A673 (cell line): ENCODE measurements at regions of chr3 and their contacts with region 1.

Region 1: GRCh38 chr3:183033746-183034145 is 53.4 kb upstream of the DCUN1D1 start:
- DNase-seq: no peak
- H3K4me3 ChIP-seq: no peak overlapping the region
- H3K27ac ChIP-seq: no peak overlapping the region
- H3K4me1 ChIP-seq: no peaks in the 10 kb centered on the region
- H3K27me3 ChIP-seq: no peaks in the 10 kb centered on the region
- CTCF ChIP-seq: no peak

Region 2: GRCh38 chr3:182980204-182981037 is 53.3 kb before region 1 on chr3 and contains the start of gene DCUN1D1:
- CTCF ChIA-PET with region 1: no interaction called
- POLR2A ChIA-PET with region 1: interaction called, 10 read pairs
- intact Hi-C with region 1: no loop called
- DNase-seq: peak; percentile 89
- H3K4me3 ChIP-seq: peak within 1 kb of the TSS; percentile 82
- H3K27ac ChIP-seq: peak within 1 kb of the TSS; percentile 78
- H3K4me1 ChIP-seq: peaks cover 17% of the 10 kb centered on the region
- H3K27me3 ChIP-seq: no peaks in the 10 kb centered on the region
- CTCF ChIP-seq: no peak
- total RNA-seq, gene DCUN1D1: 60.9 and 75.3 TPM in 2 replicates

Region 3: DNA sequence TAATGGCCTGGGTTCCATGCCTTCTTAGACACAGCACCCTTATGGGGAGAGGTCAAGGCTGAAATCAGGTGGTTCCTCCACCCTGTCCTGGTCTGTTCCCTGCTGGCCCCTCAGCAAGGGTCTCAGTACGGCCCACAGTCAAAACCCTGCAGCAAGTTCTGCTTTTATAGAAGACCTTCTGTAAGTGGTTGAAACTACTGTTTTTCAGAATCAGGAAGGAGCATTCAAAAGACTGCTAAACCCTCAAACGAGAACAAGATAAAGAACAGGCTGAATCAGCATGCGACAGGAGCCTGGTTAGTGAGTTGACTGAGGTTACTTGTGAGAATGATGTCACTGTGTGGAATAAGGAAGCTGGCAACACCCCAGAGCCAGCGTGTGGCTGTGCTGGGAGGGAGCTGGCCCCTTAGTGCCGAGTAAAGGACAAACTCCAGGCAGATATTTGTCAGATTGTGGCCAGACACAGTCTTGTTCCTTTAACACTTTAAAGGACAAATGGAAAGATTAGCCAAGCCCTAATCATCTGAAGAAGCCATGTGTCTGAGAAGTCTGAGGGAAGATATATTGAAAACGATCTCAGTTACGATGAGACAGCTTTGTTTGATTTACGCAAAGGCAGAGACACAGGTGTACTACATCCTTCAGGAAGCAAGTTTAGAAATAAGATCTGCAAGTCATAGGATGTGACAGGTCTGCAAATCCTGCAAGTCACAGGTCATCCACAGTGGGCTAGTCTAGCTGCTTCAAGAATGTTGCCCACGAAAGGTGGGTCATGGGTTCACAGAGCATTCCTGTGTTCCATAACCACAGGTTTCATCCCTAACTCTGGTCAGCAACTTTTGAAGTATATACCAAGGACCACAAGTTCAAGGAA is 273.3 kb after region 1 on chr3:
- CTCF ChIA-PET with region 1: no interaction called
- POLR2A ChIA-PET with region 1: no interaction called
- intact Hi-C with region 1: no loop called
- DNase-seq: peak; percentile 48
- H3K4me3 ChIP-seq: no peak overlapping the region
- H3K27ac ChIP-seq: no peak overlapping the region
- H3K4me1 ChIP-seq: no peaks in the 10 kb centered on the region
- H3K27me3 ChIP-seq: no peaks in the 10 kb centered on the region
- CTCF ChIP-seq: no peak